ENCODE measurements at regions of chr21 and their contacts with region 1.

Region 1: GRCh38 chr21:29091032-29091431 is 17.6 kb upstream of the CCT8 start:
- DNase-seq: no peak
- ATAC-seq: no peak
- H3K4me3 ChIP-seq: no peak overlapping the region
- H3K27ac ChIP-seq: no peak overlapping the region
- H3K4me1 ChIP-seq: peaks cover 0 to 2% of the 10 kb centered on the region in 2 donors
- H3K27me3 ChIP-seq: no peaks in the 10 kb centered on the region

Region 2: GRCh38 chr21:29144736-29145353 is 53.8 kb after region 1 on chr21:
- intact Hi-C with region 1: loop called in 1 of 2 experiments (anchors 5 kb)
- DNase-seq: no peak
- ATAC-seq: peak; percentile 47
- H3K4me3 ChIP-seq: no peak overlapping the region
- H3K27ac ChIP-seq: no peak overlapping the region
- H3K4me1 ChIP-seq: peaks cover 2 to 4% of the 10 kb centered on the region in 2 donors
- H3K27me3 ChIP-seq: no peaks in the 10 kb centered on the region

Region 3: GRCh38 chr21:29164325-29164942 is 73.4 kb after region 1 on chr21:
- intact Hi-C with region 1: loop called (anchors 5 kb)
- DNase-seq: no peak
- ATAC-seq: peak; percentile 73
- H3K4me3 ChIP-seq: no peak overlapping the region
- H3K27ac ChIP-seq: no peak overlapping the region
- H3K4me1 ChIP-seq: no peaks in the 10 kb centered on the region
- H3K27me3 ChIP-seq: no peaks in the 10 kb centered on the region

Region 4: GRCh38 chr21:29372063-29372802 is 281.2 kb after region 1 on chr21:
- intact Hi-C with region 1: loop called (anchors 2 kb)
- DNase-seq: no peak
- ATAC-seq: peak; percentile 88
- H3K4me3 ChIP-seq: no peak overlapping the region
- H3K27ac ChIP-seq: no peak overlapping the region
- H3K4me1 ChIP-seq: no peaks in the 10 kb centered on the region
- H3K27me3 ChIP-seq: no peaks in the 10 kb centered on the region